ENCODE measurements at regions of chr5 and their contacts with region 1.

Region 1: GRCh38 chr5:141524604-141525597 is 36.0 kb downstream of the PCDHGC5 start:
- DNase-seq: peak; percentile 58 to 79
- ATAC-seq: peak; percentile 85 to 91 (median 88)
- H3K4me3 ChIP-seq: no peak overlapping the region
- H3K4me3 Mint-ChIP-seq: no peak overlapping the region
- H3K27ac ChIP-seq: no peak overlapping the region
- H3K27ac Mint-ChIP-seq: peak overlapping the region; percentile 2 to 71
- H3K4me1 ChIP-seq: no peaks in the 10 kb centered on the region
- H3K4me1 Mint-ChIP-seq: peaks cover 16 to 48% of the 10 kb centered on the region in 2 donors
- H3K27me3 ChIP-seq: no peaks in the 10 kb centered on the region
- H3K27me3 Mint-ChIP-seq: no peaks in the 10 kb centered on the region
- CTCF ChIP-seq: peak; percentile 99

Region 2: DNA sequence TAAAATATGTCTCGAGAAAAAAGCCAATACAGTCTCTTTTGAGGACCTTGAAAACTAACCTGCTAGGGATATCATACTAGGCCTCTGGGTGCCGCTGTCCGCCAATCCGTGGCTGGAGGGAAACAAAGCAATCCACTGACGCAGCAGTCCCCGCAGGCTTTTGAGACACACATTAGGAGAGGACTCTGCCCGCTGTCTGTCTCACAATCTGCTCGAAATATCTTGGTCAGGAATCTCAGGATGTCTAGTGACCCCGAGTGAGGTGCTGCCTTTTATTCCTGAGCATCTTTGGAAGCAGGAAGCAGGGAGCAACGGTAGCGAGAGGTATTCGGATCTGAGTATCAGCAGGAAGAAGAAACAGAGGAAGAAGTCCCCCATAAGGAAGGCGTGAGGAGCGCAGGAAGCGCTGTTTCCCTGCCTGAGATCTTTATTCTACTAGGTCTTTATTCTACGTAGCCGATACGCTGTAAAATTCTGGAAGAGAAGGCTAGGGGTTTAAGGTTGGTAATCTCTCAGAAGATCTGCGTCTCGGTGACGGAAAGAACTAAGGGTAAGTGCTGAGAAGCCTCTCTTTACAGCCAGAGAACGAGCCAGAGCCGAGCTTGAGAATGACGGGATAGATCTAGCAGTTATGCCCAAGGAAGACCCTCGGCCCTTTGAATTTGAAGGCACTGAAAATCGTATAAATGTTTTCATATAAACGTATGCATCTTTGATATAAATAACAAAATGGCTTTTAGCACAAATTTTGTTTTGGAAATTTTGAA is 198.6 kb before region 1 on chr5:
- intact Hi-C with region 1: loop called (anchors 1 kb)
- DNase-seq: peak; percentile 52 to 81
- ATAC-seq: peak; percentile 64 to 94 (median 85)
- H3K4me3 ChIP-seq: peak overlapping the region; percentile 32
- H3K4me3 Mint-ChIP-seq: peak overlapping the region; percentile 92
- H3K27ac ChIP-seq: peak overlapping the region; percentile 22
- H3K27ac Mint-ChIP-seq: peak overlapping the region in 1 of 2 donors; percentile 92
- H3K4me1 ChIP-seq: peaks cover 8% of the 10 kb centered on the region
- H3K4me1 Mint-ChIP-seq: peaks cover 7 to 8% of the 10 kb centered on the region in 2 donors
- H3K27me3 ChIP-seq: peaks cover 15% of the 10 kb centered on the region
- H3K27me3 Mint-ChIP-seq: peaks cover 35 to 60% of the 10 kb centered on the region in 2 donors
- CTCF ChIP-seq: peak; percentile 67

Measured in natural killer cell (primary cell).